OCI-LY7 (cell line): ENCODE measurements at regions of chr10 and their contacts with region 1.

Region 1: DNA sequence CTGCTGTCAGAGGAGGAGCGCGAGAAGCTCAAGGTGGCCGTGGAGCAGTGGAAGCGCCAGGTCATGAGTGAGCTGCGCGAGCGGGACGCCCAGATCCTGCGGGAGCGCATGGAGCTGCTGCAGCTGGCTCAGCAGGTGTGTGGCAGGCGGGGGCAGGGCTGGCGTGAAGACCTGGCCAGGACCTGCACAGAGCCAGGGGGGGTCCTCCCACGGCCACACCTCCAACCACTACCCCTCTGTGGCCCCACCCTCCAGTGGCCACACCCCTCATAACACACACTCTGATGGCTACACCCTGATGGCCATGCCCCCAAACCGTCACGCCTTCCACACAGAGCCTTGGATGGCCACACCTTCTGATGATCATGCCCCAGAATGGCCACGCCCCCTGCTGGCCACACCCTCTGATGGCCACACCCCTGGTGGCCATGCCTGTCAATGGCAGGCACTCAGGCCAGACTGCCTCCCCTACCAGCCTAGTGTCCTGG is 23.4 kb upstream of the DPYSL4 start:
- DNase-seq: peak; percentile 91
- H3K4me3 ChIP-seq: peak overlapping the region; percentile 64
- H3K27ac ChIP-seq: peak overlapping the region; percentile 90
- H3K4me1 ChIP-seq: peaks cover 39% of the 10 kb centered on the region
- CTCF ChIP-seq: 0 out of 2 replicates have a peak, but pooled peaks have one; percentile 22

Region 2: DNA sequence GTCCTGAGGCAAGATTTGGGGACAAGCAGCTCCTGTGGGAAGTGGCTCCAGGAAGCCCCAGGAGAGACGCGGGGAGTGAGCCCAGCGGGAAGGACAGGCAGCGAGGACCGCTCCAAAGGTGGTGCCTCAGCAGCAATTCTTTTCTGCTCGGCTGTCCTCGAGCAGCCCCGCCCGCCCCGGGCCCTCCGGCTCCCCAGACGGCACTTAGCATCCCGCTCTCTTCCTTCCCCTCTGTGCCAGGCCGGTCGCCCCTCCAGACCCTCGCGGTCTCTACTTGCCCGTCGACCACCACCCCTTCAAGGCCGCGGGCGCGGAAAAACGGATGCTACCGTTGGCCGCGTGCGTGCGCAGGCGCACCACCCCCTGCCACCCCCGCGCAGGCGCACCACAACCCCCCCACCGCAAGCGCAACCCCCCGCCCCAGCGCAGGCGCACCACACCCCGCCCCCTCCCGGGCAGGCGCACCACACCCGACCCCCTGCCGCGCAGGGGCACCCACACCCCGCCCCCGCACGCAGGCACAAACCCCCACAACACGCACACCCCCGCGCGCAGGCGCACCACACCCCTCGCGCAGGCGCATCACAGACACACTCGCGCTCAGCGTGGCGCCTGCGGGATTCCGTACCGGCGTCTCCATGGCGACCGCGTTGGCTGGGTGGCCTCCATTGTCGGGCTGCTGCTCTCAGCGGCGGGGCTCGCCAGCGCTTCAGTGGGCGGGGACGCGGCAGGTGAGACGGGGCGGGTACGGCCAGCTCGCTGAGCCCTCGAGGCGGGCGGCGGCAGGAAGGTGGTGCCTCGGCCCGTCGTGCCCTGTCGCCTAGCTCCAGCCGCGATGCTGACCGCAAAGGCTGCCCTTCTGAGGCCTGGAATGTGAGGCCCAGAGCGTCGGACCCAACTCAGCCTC is 168.5 kb after region 1 on chr10 and contains the start of gene LRRC27:
- CTCF ChIA-PET with region 1: interaction called, 4 read pairs
- POLR2A ChIA-PET with region 1: interaction called, 5 read pairs
- intact Hi-C with region 1: loop called (anchors 5 kb)
- DNase-seq: peak; percentile 98
- H3K4me3 ChIP-seq: peak within 1 kb of the TSS; percentile 85
- H3K27ac ChIP-seq: peak within 1 kb of the TSS; percentile 76
- H3K4me1 ChIP-seq: peaks cover 53% of the 10 kb centered on the region
- CTCF ChIP-seq: no peak
- total RNA-seq, gene LRRC27: 10.0 and 13.0 TPM in 2 replicates

Region 3: DNA sequence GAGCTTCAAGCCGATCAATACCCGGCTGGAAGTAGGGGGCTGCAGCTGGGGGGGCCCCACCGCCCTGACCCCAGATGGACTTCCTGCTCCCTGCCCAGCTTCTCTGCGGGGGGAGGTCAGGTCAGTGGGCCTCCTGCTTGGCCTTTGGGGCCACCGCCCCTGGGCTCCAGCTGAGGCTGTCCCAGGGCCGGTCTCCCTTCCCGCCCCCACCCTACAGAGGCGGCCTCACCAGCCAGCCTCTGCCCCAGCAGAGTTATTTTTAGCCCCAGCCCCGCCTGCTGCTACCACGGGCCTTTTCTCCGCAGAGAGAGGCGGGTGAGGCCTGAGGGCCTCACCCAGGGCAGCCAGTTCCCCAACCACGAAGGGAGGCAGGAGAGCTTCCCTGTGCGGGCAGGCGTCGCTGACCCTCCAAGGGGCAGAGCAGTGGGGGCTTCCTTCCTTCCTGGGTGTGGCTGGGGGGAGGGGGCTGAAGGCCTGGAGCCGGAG is 258.1 kb after region 1 on chr10:
- CTCF ChIA-PET with region 1: no interaction called
- POLR2A ChIA-PET with region 1: no interaction called
- intact Hi-C with region 1: loop called (anchors 10 kb)
- DNase-seq: peak; percentile 83
- H3K4me3 ChIP-seq: peak overlapping the region; percentile 49
- H3K27ac ChIP-seq: peak overlapping the region; percentile 91
- H3K4me1 ChIP-seq: peaks cover 63% of the 10 kb centered on the region
- CTCF ChIP-seq: no peak